PC-9 (cell line): ENCODE measurements at regions of chr1 and their contacts with region 1.

Region 1: DNA sequence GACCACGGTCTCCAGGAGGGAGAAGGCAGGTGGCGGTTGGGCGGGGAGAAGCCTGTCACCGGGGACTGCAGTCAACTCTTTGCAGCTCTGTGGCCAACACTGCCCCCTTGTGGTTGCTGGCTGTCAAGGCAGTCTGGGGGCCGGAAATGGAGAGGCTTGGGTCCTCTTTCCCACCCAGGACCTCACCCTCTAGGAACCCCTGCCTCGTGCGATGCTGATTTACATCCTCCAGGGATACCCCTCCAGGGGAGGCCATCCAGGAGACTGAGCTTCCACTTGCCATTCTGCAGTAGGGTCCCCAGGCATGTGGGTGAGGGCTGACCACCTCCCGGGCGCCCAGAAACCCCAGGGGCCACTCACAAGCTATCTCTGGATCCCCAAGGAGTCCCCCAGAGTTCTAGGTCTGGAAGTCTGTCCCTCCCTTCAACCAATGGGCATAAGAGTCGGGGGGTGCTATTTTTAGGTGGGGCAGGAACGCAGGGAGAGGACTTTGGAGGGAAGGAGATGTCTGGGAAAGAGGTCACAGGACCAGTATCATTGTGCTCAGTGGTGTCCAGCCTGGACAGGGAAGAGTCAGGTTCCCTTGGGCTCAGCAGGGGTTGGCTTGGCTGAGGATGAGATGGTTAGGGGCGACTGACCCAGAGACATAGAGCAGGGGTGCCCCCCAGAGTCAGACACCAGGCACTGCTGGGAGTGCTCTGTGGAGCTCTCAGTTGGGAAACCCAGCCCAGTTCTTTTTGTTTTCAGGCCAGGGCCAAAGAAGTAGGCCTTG is 7.1 kb upstream of the GPR61 start:
- DNase-seq: peak; percentile 66 to 81
- H3K4me3 ChIP-seq: no peak overlapping the region
- H3K27ac ChIP-seq: no peak overlapping the region
- H3K4me1 ChIP-seq: no peaks in the 10 kb centered on the region
- H3K27me3 ChIP-seq: 0 out of 2 replicates have a peak, but pooled peaks cover under 1% of the 10 kb centered on the region
- CTCF ChIP-seq: peak; percentile 94

Region 2: GRCh38 chr1:109248797-109249642 is 283.5 kb before region 1 on chr1 and contains the start of gene CELSR2:
- CTCF ChIA-PET with region 1: interaction called, 15 read pairs
- POLR2A ChIA-PET with region 1: no interaction called
- intact Hi-C with region 1: no loop called
- DNase-seq: peak; percentile 59 to 69
- H3K4me3 ChIP-seq: peak within 1 kb of the TSS; percentile 58; the same call in 1 of the 2 replicates
- H3K27ac ChIP-seq: no peak within 1 kb of the TSS
- H3K4me1 ChIP-seq: peaks cover 16% of the 10 kb centered on the region
- H3K27me3 ChIP-seq: no peaks in the 10 kb centered on the region
- CTCF ChIP-seq: no peak
- total RNA-seq, gene CELSR2: 19.0 and 19.5 TPM in 2 replicates

Region 3: DNA sequence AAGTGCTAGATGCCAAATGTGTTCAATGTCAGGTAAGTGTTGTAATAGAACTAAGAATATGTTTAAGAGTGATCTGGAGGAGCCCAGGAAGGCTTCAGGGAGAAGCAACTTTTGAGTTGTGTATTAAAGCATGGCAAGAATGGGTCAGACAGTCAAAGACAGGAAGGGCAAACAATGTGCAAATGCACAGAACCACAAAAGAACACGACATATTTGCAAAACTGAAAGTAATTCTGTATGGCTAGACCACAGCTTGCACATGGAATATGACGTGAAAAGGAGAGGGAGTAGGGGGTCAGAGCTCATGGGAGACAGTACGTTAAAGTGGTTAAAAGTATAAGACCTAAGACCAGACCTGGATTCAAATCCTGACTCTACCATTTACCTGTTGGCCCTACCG is 127.7 kb before region 1 on chr1:
- CTCF ChIA-PET with region 1: no interaction called
- POLR2A ChIA-PET with region 1: no interaction called
- intact Hi-C with region 1: loop called (anchors 5 kb)
- DNase-seq: no peak
- H3K4me3 ChIP-seq: no peak overlapping the region
- H3K27ac ChIP-seq: no peak overlapping the region
- H3K4me1 ChIP-seq: no peaks in the 10 kb centered on the region
- H3K27me3 ChIP-seq: no peaks in the 10 kb centered on the region
- CTCF ChIP-seq: no peak

Region 4: DNA sequence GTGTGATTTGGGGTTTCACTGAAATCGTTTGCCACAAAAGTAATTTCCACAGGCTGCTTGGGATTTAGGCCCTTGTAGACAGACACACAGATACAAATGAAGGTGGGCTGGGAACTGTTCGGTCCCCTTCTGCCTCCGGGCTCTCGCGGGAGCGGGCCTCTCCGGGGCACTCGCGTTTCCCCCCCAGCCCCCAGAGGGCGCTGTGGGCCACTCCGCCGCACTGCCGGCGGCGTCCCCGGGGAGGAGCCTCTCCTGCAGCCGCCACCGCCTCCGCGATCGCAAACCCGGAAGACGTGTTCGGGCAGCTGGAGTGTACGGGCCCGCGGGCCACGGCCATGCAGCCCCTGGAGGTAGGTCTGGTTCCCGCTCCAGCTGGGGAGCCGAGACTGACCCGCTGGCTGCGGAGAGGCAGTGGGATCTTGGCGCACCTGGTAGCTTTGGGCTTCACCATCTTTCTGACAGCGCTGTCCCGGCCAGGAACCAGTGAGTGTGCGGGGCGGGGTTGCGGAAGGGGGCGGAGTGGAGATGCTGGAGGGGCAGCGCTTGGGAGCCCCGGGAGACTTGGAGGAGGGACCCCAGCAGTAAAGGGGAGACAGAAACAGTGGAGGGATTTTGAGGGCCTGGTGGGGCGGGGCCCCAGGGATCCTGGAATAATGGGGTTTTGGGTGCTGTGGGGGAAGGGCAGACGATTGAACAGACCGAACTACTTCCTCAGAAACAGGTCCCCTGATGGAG is 38.6 kb before region 1 on chr1 and contains the start of gene CYB561D1:
- CTCF ChIA-PET with region 1: interaction called, 25 read pairs
- POLR2A ChIA-PET with region 1: no interaction called
- intact Hi-C with region 1: loop called (anchors 2 kb)
- DNase-seq: peak; percentile 78 to 89
- H3K4me3 ChIP-seq: peak within 1 kb of the TSS; percentile 96
- H3K27ac ChIP-seq: no peak within 1 kb of the TSS
- H3K4me1 ChIP-seq: peaks cover 17% of the 10 kb centered on the region
- H3K27me3 ChIP-seq: no peaks in the 10 kb centered on the region
- CTCF ChIP-seq: peak; percentile 97
- total RNA-seq, gene CYB561D1: 11.6 and 11.7 TPM in 2 replicates

Region 5: GRCh38 chr1:109499661-109500536 is 32.7 kb before region 1 on chr1:
- CTCF ChIA-PET with region 1: interaction called, 6 read pairs
- POLR2A ChIA-PET with region 1: no interaction called
- intact Hi-C with region 1: loop called (anchors 2 kb)
- DNase-seq: peak; percentile 51 to 69
- H3K4me3 ChIP-seq: no peak overlapping the region
- H3K27ac ChIP-seq: no peak overlapping the region
- H3K4me1 ChIP-seq: peaks cover 17% of the 10 kb centered on the region
- H3K27me3 ChIP-seq: no peaks in the 10 kb centered on the region
- CTCF ChIP-seq: peak; percentile 86

Region 6: DNA sequence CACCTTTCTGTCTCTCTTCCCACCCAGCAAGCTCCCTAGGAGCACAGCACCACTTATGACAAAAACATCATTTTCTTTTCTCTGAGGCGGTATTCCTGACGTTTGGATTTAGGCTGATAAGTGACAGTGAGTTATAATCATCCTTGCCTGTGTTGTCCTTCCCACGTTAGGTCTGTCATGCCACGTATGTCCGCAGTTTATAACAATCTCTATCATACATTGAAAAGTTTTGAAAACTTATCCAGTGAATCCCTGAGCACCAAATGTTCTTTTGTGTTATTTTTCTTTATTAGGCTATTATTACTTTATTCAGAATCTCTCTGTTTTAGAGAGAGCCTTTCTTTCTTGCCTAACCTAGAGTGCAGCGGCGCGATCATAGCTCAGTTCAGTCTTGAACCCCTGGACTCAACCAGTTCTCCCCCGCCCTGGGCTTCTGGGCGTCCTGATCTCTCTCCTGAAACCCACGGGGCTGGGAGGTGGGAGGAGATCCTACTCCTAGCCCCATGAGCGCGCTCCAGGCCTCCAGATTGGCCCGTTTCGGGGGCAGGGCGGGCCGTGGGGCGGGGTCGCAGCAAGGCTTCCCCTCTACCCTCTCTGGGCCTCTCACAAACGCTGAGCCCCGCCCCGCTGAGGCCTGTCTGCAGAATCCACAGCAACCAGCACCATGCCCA is 135.0 kb after region 1 on chr1 and contains the start of gene GSTM2:
- CTCF ChIA-PET with region 1: no interaction called
- POLR2A ChIA-PET with region 1: no interaction called
- intact Hi-C with region 1: no loop called
- DNase-seq: no peak
- H3K4me3 ChIP-seq: no peak within 1 kb of the TSS
- H3K27ac ChIP-seq: no peak within 1 kb of the TSS
- H3K4me1 ChIP-seq: peaks cover 19% of the 10 kb centered on the region
- H3K27me3 ChIP-seq: no peaks in the 10 kb centered on the region
- CTCF ChIP-seq: no peak
- total RNA-seq, gene GSTM2: 9.3 and 10.2 TPM in 2 replicates